OCI-LY7 (cell line): ENCODE measurements at regions of chr19 and their contacts with region 1.

Region 1: GRCh38 chr19:2227415-2228156 is 8.5 kb downstream of the PLEKHJ1 start:
- DNase-seq: peak; percentile 99
- H3K4me3 ChIP-seq: peak overlapping the region; percentile 57
- H3K27ac ChIP-seq: peak overlapping the region; percentile 94
- H3K4me1 ChIP-seq: peaks cover 67% of the 10 kb centered on the region
- CTCF ChIP-seq: peak; percentile 49; the same call in 1 of the 2 replicates

Region 2: DNA sequence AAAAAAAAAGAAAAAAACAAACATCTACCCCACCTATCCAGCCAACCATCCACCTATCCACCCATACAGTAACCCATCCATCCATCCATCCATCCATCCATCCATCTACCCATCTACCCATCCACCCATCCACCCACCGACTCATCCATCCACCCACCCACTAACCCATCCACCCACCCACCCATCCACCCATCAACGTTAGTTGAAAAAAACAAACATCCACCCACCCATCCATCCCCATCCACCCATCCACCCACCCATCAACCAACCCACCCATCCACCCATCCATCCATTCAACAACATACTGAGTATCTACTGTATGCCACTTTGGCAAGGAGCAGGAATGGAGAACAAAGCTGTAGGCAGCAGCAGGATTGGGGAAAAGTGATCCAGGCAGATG is 70.1 kb before region 1 on chr19:
- CTCF ChIA-PET with region 1: no interaction called
- POLR2A ChIA-PET with region 1: interaction called, 4 read pairs
- intact Hi-C with region 1: loop called (anchors 2 kb)
- DNase-seq: no peak
- H3K4me3 ChIP-seq: no peak overlapping the region
- H3K27ac ChIP-seq: no peak overlapping the region
- H3K4me1 ChIP-seq: peaks cover 1% of the 10 kb centered on the region
- CTCF ChIP-seq: no peak

Region 3: GRCh38 chr19:2207991-2208860 is 19.4 kb before region 1 on chr19:
- CTCF ChIA-PET with region 1: no interaction called
- POLR2A ChIA-PET with region 1: no interaction called
- intact Hi-C with region 1: no loop called
- DNase-seq: peak; percentile 56
- H3K4me3 ChIP-seq: no peak overlapping the region
- H3K27ac ChIP-seq: no peak overlapping the region
- H3K4me1 ChIP-seq: no peaks in the 10 kb centered on the region
- CTCF ChIP-seq: peak; percentile 67

Region 4: GRCh38 chr19:2294611-2295335 is 67.2 kb after region 1 on chr19:
- CTCF ChIA-PET with region 1: interaction called, 17 read pairs
- POLR2A ChIA-PET with region 1: no interaction called
- intact Hi-C with region 1: no loop called
- DNase-seq: no peak
- H3K4me3 ChIP-seq: no peak overlapping the region
- H3K27ac ChIP-seq: no peak overlapping the region
- H3K4me1 ChIP-seq: peaks cover 16% of the 10 kb centered on the region
- CTCF ChIP-seq: no peak